Natural killer cell (primary cell): ENCODE measurements at regions of chr12 and their contacts with region 1.

Region 1: DNA sequence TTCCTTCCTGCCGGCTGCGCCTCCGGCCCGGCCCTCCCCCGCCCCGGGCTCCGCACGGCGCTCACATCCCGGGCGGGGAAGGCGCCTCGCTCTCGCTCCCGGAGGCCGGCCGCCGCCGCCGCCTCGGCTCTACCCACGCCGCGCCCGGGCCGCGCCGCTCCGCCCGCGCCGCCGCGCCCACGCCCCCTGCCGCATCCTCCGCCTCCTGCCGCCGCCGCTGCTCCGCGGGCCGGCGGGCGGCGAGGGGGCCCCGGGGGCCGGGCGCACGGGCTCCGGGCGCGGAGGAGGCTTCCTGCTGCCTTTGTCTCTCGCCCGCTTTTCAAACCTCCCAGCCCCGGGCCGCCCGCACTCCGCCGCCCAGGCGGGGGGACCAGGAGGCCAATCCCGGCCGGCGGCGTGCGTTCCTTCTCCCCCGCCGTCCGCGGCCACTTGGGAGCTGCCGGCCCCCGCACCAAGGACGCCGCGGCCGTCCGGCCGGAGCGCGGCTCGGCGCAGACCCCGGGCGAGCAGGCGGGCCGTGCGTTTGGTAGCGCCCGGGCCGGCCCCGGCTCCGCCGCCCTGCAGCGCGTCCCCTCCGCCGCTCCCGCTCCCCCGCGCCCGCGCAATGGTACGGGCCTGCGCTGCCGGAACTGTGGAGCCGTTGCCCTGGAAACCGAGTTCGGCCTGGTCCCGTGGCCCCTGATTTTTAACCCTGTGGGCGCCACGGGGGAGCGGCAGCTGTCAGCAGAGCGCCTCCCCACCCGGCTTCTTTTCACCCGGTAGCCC is at the start of gene FBXL14:
- DNase-seq: peak; percentile 89 to 95
- ATAC-seq: peak; percentile 75 to 87 (median 79)
- H3K4me3 ChIP-seq: peak within 1 kb of the TSS; percentile 78
- H3K4me3 Mint-ChIP-seq: peak within 1 kb of the TSS; percentile 95
- H3K27ac ChIP-seq: peak within 1 kb of the TSS; percentile 97
- H3K27ac Mint-ChIP-seq: peak within 1 kb of the TSS; percentile 95 to 98
- H3K4me1 ChIP-seq: peaks cover 34% of the 10 kb centered on the region
- H3K4me1 Mint-ChIP-seq: peaks cover 49 to 58% of the 10 kb centered on the region in 2 donors
- H3K27me3 ChIP-seq: no peaks in the 10 kb centered on the region
- H3K27me3 Mint-ChIP-seq: no peaks in the 10 kb centered on the region
- CTCF ChIP-seq: no peak
- total RNA-seq, gene FBXL14: 18.7 to 24.9 (median 22.8) TPM

Region 2: DNA sequence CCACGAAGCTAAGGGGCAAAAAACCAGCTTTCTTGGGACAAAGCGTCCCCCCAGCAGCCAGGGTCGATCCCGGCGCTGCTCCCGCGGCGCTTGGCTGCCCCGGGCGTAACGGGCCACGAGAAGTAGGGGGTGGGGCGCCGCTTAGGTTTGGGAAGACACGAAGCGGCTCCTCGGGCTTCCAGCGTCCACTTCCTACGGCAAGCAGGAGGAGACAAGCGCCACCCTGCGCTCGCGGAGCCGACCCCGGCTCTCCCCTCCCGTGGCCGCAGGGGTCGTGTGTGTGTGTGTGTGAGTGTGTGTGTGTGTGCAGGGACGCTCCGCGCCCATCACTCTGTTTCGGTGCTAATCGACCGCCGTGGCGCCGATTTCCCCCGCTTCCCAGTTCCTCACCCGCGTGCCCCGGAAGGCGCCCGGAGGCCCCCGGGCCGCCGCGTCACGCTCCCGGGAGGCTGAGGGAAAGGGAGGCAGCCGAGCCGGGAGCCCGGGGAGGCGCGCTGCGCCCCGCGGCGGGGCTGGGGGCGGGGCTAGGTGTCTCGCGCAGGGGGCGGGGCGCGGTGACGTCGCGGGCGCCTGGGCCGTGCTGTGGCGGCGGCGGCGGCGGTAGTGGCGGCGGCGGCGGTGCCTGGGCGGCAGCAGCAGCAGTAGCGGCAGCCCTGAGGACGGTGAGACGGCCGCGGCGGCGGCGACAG is 603.6 kb before region 1 on chr12 and contains the start of gene ERC1:
- intact Hi-C with region 1: loop called (anchors 5 kb)
- DNase-seq: peak; percentile 87 to 90
- ATAC-seq: peak; percentile 83 to 90 (median 87)
- H3K4me3 ChIP-seq: peak within 1 kb of the TSS; percentile 85
- H3K4me3 Mint-ChIP-seq: peak within 1 kb of the TSS; percentile 93
- H3K27ac ChIP-seq: peak within 1 kb of the TSS; percentile 73
- H3K27ac Mint-ChIP-seq: peak within 1 kb of the TSS; percentile 85 to 89
- H3K4me1 ChIP-seq: peaks cover 11% of the 10 kb centered on the region
- H3K4me1 Mint-ChIP-seq: peaks cover 27 to 48% of the 10 kb centered on the region in 2 donors
- H3K27me3 ChIP-seq: no peaks in the 10 kb centered on the region
- H3K27me3 Mint-ChIP-seq: no peaks in the 10 kb centered on the region
- CTCF ChIP-seq: no peak
- total RNA-seq, gene ERC1: 43.5 to 54.0 (median 44.9) TPM